ENCODE measurements at regions of chr12 and their contacts with region 1.

Region 1: GRCh38 chr12:41605545-41606305 is 417.6 kb downstream of the PDZRN4 start:
- DNase-seq: no peak
- H3K4me3 ChIP-seq: no peak overlapping the region
- H3K27ac ChIP-seq: no peak overlapping the region
- H3K4me1 ChIP-seq: no peaks in the 10 kb centered on the region
- H3K27me3 ChIP-seq: no peaks in the 10 kb centered on the region
- CTCF ChIP-seq: no peak
- POLR2A ChIP-seq: no peak

Region 2: GRCh38 chr12:41419131-41419893 is 186.4 kb before region 1 on chr12:
- CTCF ChIA-PET with region 1: no interaction called
- POLR2A ChIA-PET with region 1: no interaction called
- dilution Hi-C with region 1: no loop called
- intact Hi-C with region 1: no loop called
- DNase-seq: no peak
- H3K4me3 ChIP-seq: no peak overlapping the region
- H3K27ac ChIP-seq: no peak overlapping the region
- H3K4me1 ChIP-seq: no peaks in the 10 kb centered on the region
- H3K27me3 ChIP-seq: no peaks in the 10 kb centered on the region
- CTCF ChIP-seq: no peak
- POLR2A ChIP-seq: no peak

Region 3: DNA sequence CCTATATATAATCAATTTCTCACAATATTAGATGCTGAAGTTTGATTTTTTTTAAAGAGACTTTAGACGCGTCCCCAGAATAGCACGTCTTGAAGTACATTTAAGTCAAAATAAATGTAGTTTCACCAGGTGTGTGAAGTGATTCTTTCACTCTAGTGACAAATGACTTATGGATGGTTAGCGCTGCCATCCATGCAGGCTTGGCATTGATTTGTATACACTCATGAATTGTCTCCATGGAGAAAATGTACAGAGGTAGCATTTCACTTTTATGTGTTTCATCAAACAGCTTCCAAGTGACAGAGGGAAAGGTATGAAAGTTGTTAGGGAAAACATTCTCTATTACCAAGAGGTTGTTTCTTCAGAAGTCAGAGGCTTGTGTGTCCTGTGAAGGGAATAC is 56.8 kb before region 1 on chr12:
- CTCF ChIA-PET with region 1: no interaction called
- POLR2A ChIA-PET with region 1: no interaction called
- dilution Hi-C with region 1: no loop called
- intact Hi-C with region 1: loop called (anchors 10 kb)
- DNase-seq: no peak
- H3K4me3 ChIP-seq: no peak overlapping the region
- H3K27ac ChIP-seq: no peak overlapping the region
- H3K4me1 ChIP-seq: peaks cover 3% of the 10 kb centered on the region
- H3K27me3 ChIP-seq: no peaks in the 10 kb centered on the region
- CTCF ChIP-seq: no peak
- POLR2A ChIP-seq: no peak

Region 4: DNA sequence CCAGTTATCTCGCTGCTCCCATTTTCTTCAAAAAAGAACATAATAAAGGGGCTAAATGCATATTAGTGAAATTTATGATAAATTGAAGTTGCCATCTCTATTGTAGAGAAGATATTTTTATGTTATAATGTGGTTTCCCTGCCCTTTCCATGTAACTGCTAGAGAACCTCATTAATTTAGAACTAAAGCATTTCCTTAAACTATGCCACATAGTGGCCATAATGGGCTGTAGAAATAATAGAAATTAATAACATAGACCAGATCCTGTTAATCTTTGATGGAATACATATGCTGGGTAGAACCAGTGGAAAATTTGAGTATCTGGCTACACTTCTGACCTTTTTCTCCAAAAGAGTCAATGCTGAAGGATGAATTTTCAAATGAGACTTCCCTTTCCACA is 40.9 kb before region 1 on chr12:
- CTCF ChIA-PET with region 1: no interaction called
- POLR2A ChIA-PET with region 1: no interaction called
- dilution Hi-C with region 1: no loop called
- intact Hi-C with region 1: no loop called
- DNase-seq: no peak
- H3K4me3 ChIP-seq: no peak overlapping the region
- H3K27ac ChIP-seq: no peak overlapping the region
- H3K4me1 ChIP-seq: no peaks in the 10 kb centered on the region
- H3K27me3 ChIP-seq: no peaks in the 10 kb centered on the region
- CTCF ChIP-seq: no peak
- POLR2A ChIP-seq: no peak